Stomach (tissue), 19 donors: ENCODE measurements at regions of chr5 and their contacts with region 1.

Region 1: DNA sequence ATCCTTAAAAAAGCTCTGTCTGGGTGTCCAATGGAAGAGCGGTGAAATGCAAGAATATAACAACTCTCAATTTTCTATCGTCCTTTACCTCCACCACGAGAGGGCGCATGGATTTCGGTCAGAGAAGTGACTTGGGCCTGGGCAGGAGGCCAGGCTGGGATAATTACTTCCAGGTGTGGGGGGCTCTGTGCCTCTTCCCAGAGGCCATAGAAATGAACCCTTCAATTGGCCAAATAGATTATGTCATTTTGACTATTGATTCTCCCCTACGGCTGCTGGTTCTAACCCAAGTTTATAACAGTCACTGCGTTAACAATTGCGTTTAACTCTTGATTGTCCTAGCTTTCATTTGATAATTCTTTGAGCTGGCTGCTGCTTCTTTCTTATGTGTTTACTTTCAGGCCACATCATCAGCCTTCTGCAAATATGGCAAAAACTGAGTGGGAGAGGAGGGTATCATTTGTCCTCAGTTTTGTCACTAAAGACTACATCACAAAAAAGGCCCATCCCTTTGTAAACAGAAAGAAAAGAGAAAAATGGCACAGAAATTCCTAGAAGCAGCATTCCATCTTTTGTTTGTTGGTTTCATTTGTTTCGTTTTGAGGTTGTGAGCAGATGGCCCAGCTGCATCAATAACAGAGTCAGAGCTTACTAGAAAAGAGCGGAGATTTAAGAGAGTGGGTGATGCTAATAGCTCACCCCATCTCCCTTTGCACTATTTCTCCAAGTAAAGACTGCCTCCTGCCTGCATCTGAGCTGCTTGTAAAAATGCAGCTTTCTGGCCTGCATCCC is 45.4 kb upstream of the ZFR start:
- DNase-seq: peak; percentile 76 to 94
- H3K4me3 ChIP-seq: no peak overlapping the region
- H3K27ac ChIP-seq: no peak overlapping the region
- H3K4me1 ChIP-seq: peaks cover 0 to 8% (median 4%) of the 10 kb centered on the region in 4 donors
- H3K27me3 ChIP-seq: no peaks in the 10 kb centered on the region
- CTCF ChIP-seq: peak in 5 of 7 experiments; percentile 36 to 69 (median 63)
- EP300 ChIP-seq: no peak
- POLR2A ChIP-seq: no peak

Region 2: DNA sequence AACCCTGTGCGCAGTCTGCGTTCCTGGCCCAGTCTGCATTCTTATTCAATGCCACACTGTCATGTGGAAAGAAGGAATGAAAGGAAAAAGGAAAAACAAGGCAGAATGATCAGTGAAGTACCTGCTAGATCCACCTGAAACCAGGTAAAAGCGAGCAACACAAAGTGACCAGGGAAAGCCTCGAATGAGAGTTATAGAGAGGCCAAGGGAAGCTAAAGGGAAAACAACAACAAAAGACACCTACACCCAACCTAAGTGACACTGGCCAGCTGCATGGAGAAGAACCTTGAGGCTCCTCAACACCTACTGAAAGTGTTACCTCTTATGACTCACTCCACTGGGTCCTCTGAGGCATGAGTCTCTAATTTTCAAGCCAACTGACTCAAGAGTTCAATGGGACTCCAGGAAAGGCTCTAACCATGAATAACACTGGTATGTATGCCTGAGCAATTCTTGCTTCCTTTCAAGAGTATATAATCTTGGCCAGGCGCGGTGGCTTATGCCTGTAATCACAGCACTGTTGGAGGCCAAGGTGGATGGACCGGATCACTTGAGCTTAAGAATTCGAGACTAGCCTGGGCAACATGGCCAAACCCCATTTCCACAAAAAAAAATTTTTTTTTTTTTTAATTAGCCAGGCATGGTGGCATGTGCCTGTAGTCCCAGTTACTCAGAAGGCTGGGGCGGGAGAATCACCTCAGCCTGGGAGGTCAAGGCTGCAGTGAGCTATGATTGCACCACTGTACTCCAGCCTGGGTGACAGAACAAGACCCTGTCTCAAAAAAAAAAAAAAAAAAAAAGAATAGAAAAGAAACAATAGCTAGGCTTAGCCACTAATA is 206.2 kb before region 1 on chr5:
- intact Hi-C with region 1: no loop called
- DNase-seq: no peak
- H3K4me3 ChIP-seq: no peak overlapping the region
- H3K27ac ChIP-seq: peak overlapping the region in 2 of 5 donors; percentile 1 to 55
- H3K4me1 ChIP-seq: peaks cover 25 to 77% (median 53%) of the 10 kb centered on the region in 4 donors
- H3K27me3 ChIP-seq: no peaks in the 10 kb centered on the region
- CTCF ChIP-seq: no peak
- EP300 ChIP-seq: no peak
- POLR2A ChIP-seq: no peak

Region 3: GRCh38 chr5:32589942-32590869 is 100.2 kb after region 1 on chr5:
- intact Hi-C with region 1: loop called (anchors 5 kb)
- DNase-seq: peak in 1 of 2 donors; percentile 80
- H3K4me3 ChIP-seq: no peak overlapping the region
- H3K27ac ChIP-seq: no peak overlapping the region
- H3K4me1 ChIP-seq: peaks cover 7 to 72% (median 35%) of the 10 kb centered on the region in 4 donors
- H3K27me3 ChIP-seq: no peaks in the 10 kb centered on the region
- CTCF ChIP-seq: peak in 5 of 7 experiments; percentile 40 to 85 (median 72)
- EP300 ChIP-seq: no peak
- POLR2A ChIP-seq: no peak

Region 4: DNA sequence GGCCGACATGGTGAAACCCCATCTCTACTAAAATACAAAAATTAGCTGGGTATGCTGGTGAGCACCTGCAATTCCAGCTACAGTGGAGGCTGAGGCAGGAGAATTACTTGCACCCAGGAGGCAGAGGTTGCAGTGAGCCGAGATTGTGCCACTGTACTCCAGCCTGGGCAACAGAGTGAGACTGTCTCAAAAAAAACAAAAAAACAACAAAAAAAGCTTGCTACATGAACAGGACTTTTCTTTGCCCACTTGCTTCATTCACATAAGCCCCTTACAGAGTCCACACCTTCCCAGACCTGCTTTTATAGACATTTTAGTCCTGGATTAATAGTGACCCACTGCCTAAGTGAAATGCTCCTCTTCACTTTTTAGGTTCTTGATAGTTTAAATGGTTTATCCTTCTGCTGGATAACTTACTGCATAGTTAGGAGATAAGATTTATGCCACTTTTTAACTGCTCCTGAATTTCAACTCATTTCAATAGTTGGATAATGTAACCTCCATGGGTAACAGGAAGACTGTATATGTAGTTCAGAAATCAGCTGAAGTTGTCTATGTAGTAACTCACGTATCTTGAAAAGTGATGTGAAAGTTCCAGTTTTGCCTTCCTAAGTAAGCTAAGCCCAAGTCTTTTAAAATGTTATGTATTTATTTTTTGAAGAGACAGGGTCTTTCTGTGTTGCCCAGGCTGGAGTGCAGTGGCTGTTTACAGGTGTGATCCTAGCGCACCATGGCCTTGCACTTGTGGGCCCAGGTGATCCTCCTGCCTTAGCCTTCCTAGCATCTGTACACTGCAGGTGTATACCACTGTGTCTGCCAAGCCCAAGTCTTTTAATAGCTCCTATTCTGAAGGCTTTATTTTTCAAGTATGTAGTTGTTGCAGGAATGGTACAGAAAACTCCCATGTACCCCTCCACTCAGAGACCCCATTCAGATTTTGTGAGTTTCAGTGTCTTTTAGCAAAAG is 115.1 kb after region 1 on chr5:
- intact Hi-C with region 1: no loop called
- DNase-seq: no peak
- H3K4me3 ChIP-seq: no peak overlapping the region
- H3K27ac ChIP-seq: no peak overlapping the region
- H3K4me1 ChIP-seq: peaks cover 0 to 30% (median 7%) of the 10 kb centered on the region in 4 donors
- H3K27me3 ChIP-seq: no peaks in the 10 kb centered on the region
- CTCF ChIP-seq: no peak
- EP300 ChIP-seq: no peak
- POLR2A ChIP-seq: no peak